A549 (cell line): ENCODE measurements at regions of chr10 and their contacts with region 1.

Region 1: DNA sequence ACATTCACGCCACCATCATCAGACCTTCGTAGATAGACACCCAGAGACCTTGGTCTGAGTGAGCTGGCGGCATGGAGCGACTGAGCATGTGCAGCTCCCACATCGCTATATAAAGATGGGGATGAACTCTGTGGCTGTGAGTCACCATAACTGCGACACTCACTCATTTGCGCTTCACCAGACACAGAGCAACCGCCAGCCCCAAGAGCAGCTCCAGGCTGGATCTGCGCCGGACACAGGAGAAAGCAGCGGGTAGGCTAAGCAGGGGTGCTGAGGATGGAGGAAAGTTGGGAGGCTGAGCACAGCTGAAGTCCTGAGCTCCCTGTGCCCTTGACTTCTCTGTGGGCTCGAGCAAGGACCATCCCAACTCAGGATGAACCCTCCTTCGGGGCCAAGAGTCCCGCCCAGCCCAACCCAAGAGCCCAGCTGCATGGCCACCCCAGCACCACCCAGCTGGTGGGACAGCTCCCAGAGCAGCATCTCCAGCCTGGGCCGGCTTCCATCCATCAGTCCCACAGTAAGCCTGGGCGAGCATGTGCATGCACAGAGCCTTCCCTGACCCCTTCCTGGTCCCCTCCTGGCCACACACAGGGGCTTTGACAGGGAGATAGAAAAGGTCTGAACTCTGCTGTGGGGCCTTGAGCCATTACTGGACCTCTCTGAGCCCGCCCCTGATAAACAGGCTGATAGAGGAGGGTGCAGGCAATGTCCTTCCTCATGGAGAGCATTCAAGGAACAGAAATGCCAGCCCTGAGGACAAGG is at the start of gene OPN4:
- DNase-seq: no peak
- ATAC-seq: peak; percentile 8 to 14; a peak in 1 of 6 replicates
- H3K4me3 ChIP-seq: no peak within 1 kb of the TSS
- H3K27ac ChIP-seq: no peak within 1 kb of the TSS
- H3K4me1 ChIP-seq: peaks cover 4% of the 10 kb centered on the region
- CTCF ChIP-seq: no peak
- EP300 ChIP-seq: no peak
- POLR2A ChIP-seq: no peak
- RAD21 ChIP-seq: no peak
- polyA plus RNA-seq, gene OPN4: not detected in 2 replicates

Region 2: DNA sequence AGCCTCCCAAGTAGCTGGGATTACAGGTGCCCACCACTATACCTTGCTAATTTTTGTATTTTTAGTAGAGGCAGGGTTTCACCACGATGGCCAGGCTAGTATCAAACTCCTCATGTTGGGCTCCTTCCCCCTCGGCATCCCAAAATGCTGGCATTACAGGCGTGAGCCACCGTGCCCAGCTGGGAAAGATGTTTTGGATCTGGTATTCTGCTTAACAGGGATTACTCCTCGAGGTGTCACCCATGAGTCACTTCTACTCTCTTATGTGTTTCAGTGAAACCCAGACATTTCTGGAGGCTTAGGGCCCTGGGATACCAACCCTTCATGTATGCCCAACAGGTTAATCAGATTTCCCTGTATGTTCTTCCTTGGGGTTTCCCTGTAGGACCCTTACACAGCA is 12.1 kb before region 1 on chr10:
- CTCF ChIA-PET with region 1: interaction called, 10 read pairs
- POLR2A ChIA-PET with region 1: no interaction called
- DNase-seq: peak; percentile 28 to 36
- ATAC-seq: peak; percentile 71 to 77; a peak in 5 of 6 replicates
- H3K4me3 ChIP-seq: no peak overlapping the region
- H3K27ac ChIP-seq: no peak overlapping the region
- H3K4me1 ChIP-seq: peaks cover 6% of the 10 kb centered on the region; the same call in 2 of the 3 replicates
- CTCF ChIP-seq: no peak
- EP300 ChIP-seq: no peak
- POLR2A ChIP-seq: no peak
- RAD21 ChIP-seq: peak in 1 of 2 experiments; percentile 23; a peak in 1 of 5 replicates